Activated CD4-positive, alpha-beta T cell treated with anti-CD3 and anti-CD28 coated beads for 36 hours (primary cell): ENCODE measurements at regions of chr1 and their contacts with region 1.

Region 1: DNA sequence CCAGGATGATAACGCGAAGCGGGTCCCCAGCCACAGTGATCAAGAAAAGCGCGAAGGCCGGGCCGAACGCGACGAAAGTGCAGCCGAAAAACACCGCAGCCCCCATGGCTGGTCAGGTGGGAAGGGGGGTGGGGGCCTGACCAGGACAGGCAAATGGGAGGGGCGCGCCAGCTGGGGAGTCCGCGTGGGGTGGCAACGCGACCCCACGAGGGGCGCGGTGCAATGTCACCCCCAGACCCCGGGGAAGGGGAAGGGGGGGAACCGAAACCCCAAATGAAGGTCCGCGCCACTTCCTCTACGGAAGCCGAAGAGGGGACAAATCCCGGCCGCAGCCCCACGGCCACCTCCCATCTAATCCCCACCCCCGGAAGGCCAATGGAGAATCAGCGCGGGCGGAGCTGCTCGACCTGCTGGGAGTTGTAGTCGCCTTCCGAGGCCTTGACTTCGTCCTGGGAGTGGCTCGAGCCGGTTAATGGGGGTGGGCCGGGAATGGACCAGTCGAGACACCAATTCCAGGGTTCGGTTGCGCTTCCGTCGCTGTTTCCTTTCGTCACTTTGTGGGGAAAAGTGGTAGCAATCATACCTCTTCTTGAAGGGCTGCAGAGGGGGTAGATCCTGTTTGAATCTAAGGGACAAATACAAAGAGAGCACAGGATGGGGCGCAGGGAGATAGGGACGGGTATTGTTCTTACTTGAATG is at the start of gene APH1A:
- DNase-seq: peak; percentile 97
- ATAC-seq: peak; percentile 99
- H3K4me3 Mint-ChIP-seq: peak within 1 kb of the TSS; percentile 89
- H3K27ac Mint-ChIP-seq: peak within 1 kb of the TSS; percentile 98
- H3K4me1 Mint-ChIP-seq: peaks cover 25% of the 10 kb centered on the region
- H3K27me3 Mint-ChIP-seq: no peaks in the 10 kb centered on the region
- total RNA-seq, gene APH1A: 62.4 to 89.3 TPM

Region 2: GRCh38 chr1:150281837-150282653 is 13.2 kb after region 1 on chr1 and contains the start of gene CIART:
- CTCF ChIA-PET with region 1: interaction called, 8 read pairs
- POLR2A ChIA-PET with region 1: no interaction called
- intact Hi-C with region 1: loop called (anchors 1 kb)
- DNase-seq: peak; percentile 89
- ATAC-seq: peak; percentile 96
- H3K4me3 Mint-ChIP-seq: peak within 1 kb of the TSS; percentile 77
- H3K27ac Mint-ChIP-seq: peak within 1 kb of the TSS; percentile 92
- H3K4me1 Mint-ChIP-seq: peaks cover 29% of the 10 kb centered on the region
- H3K27me3 Mint-ChIP-seq: no peaks in the 10 kb centered on the region
- total RNA-seq, gene CIART: 5.9 to 6.0 TPM

Region 3: GRCh38 chr1:150486964-150487762 is 218.3 kb after region 1 on chr1 and contains the start of gene TARS2:
- CTCF ChIA-PET with region 1: no interaction called
- POLR2A ChIA-PET with region 1: no interaction called
- intact Hi-C with region 1: loop called in 1 of 2 experiments (anchors 1 kb)
- DNase-seq: peak; percentile 96
- ATAC-seq: peak; percentile 100
- H3K4me3 Mint-ChIP-seq: peak within 1 kb of the TSS; percentile 96
- H3K27ac Mint-ChIP-seq: peak within 1 kb of the TSS; percentile 99
- H3K4me1 Mint-ChIP-seq: peaks cover 13% of the 10 kb centered on the region
- H3K27me3 Mint-ChIP-seq: no peaks in the 10 kb centered on the region
- total RNA-seq, gene TARS2: 43.8 to 58.6 TPM